ENCODE measurements at regions of chr1 and their contacts with region 1.

Region 1: GRCh38 chr1:91282695-91283420 is 121.8 kb downstream of the HFM1 start:
- DNase-seq: peak in 8 of 9 experiments; percentile 4 to 68 (median 32)
- ATAC-seq: no peak
- H3K4me3 ChIP-seq: no peak overlapping the region
- H3K4me3 Mint-ChIP-seq: no peak overlapping the region
- H3K27ac ChIP-seq: no peak overlapping the region
- H3K27ac Mint-ChIP-seq: no peak overlapping the region
- H3K4me1 ChIP-seq: no peaks in the 10 kb centered on the region
- H3K4me1 Mint-ChIP-seq: peaks cover 2% of the 10 kb centered on the region
- H3K27me3 ChIP-seq: no peaks in the 10 kb centered on the region
- H3K27me3 Mint-ChIP-seq: peaks cover 10% of the 10 kb centered on the region
- CTCF ChIP-seq: peak; percentile 73

Region 2: DNA sequence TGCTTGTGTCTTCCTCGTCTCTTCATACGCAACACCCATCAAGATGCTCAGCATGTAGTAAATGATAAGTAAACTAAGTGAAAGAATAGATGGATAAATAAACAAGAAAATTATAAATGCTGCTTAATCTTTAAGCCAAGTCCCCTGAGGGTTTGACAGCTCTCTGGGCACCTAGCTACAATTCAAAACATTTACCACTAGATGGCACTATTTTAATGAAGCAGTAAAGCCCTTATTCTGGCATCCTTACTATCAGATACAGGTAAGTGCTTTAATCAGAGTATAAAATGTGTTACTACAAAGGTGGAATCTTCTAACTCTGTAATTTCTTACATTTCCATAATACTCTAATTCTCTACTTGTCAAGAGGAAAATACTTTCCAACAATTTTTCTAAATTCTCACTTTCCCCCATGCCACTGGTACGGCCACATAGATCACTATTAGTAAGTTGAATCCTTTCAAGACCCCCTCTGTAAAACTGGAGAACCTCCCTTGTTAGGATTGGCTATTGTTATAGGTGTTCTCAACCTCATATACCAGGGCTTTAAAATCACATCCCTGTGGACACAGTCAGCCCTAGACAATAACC is 703.6 kb before region 1 on chr1:
- CTCF ChIA-PET with region 1: interaction called, 4 read pairs
- POLR2A ChIA-PET with region 1: no interaction called
- intact Hi-C with region 1: loop called (anchors 2 to 10 kb)
- DNase-seq: peak in 2 of 9 experiments; percentile 37 to 50
- ATAC-seq: no peak
- H3K4me3 ChIP-seq: no peak overlapping the region
- H3K4me3 Mint-ChIP-seq: no peak overlapping the region
- H3K27ac ChIP-seq: no peak overlapping the region
- H3K27ac Mint-ChIP-seq: no peak overlapping the region
- H3K4me1 ChIP-seq: no peaks in the 10 kb centered on the region
- H3K4me1 Mint-ChIP-seq: no peaks in the 10 kb centered on the region
- H3K27me3 ChIP-seq: peaks cover 2 to 3% of the 10 kb centered on the region in 2 experiments
- H3K27me3 Mint-ChIP-seq: no peaks in the 10 kb centered on the region
- CTCF ChIP-seq: peak; percentile 56

Region 3: DNA sequence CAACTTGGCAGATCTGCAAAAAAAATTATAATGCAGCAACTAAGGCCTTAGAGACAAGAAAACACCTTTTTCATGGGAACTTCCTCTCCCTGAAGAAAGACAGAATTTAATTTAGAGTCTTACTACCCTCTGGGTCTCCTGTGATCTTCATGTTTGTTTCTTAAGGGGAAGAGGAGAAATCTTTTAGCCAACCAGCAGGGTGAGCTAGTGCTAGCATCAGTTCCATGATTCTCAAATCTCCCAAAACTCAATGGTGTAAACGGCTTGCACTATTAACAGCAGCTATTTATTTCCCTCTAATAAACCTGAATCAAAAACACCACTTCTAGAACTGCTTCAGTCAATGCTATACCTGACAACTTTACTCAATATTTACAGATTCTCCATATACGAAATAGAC is 264.9 kb before region 1 on chr1:
- CTCF ChIA-PET with region 1: no interaction called
- POLR2A ChIA-PET with region 1: no interaction called
- intact Hi-C with region 1: no loop called
- DNase-seq: peak in 2 of 9 experiments; percentile 37 to 58
- ATAC-seq: no peak
- H3K4me3 ChIP-seq: no peak overlapping the region
- H3K4me3 Mint-ChIP-seq: peak overlapping the region; percentile 58
- H3K27ac ChIP-seq: no peak overlapping the region
- H3K27ac Mint-ChIP-seq: peak overlapping the region; percentile 14
- H3K4me1 ChIP-seq: peaks cover 66% of the 10 kb centered on the region
- H3K4me1 Mint-ChIP-seq: peaks cover 81% of the 10 kb centered on the region
- H3K27me3 ChIP-seq: no peaks in the 10 kb centered on the region
- H3K27me3 Mint-ChIP-seq: no peaks in the 10 kb centered on the region
- CTCF ChIP-seq: peak; percentile 22

Region 4: DNA sequence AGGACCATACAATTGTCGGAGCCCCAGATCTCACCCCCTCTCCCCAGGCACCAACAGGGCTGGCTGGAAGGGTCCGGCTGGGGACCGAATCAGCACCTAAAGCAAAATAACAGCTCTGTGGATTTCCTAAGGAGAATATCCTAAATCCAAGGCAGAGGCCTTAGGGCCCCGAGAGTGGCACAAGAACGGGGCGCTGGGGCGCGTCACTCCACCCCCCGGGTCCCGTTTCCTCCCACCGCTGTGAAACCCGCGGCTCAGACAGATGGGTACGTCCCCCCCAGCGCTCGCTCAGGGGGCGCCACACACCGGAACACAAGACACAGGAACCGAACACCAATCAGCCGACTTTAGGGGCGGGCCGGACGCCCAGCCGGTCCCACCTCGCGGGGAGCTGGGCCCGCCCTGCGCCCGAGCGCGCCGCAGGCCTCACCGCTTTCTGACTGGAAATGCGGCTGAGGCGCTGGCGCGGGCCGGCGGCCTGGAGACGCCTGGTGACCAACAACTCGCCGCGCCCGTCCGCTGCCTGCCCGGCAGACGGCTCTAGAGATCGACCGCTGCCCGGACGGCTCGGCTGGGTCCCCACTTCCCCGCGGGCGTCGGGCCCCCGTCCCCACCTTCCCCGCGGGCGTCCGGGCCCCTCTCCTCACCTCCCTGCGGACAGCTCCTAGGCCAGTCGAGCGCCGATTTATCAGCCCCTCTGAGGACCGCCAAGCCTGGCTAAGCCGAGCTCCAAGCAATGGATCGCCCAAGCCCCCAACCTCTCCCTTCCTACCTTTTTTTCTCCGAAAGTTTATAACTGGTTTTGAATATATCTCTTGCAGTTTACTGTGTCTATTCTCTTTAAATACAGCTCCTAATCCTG is 121.5 kb after region 1 on chr1 and contains the start of gene HFM1:
- CTCF ChIA-PET with region 1: no interaction called
- POLR2A ChIA-PET with region 1: no interaction called
- intact Hi-C with region 1: loop called (anchors 1 to 5 kb)
- DNase-seq: peak; percentile 21 to 83 (median 61)
- ATAC-seq: peak; percentile 99
- H3K4me3 ChIP-seq: peak within 1 kb of the TSS; percentile 41 to 54
- H3K4me3 Mint-ChIP-seq: peak within 1 kb of the TSS; percentile 80
- H3K27ac ChIP-seq: no peak within 1 kb of the TSS
- H3K27ac Mint-ChIP-seq: peak within 1 kb of the TSS; percentile 66
- H3K4me1 ChIP-seq: peaks cover 7% of the 10 kb centered on the region
- H3K4me1 Mint-ChIP-seq: peaks cover 11% of the 10 kb centered on the region
- H3K27me3 ChIP-seq: no peaks in the 10 kb centered on the region
- H3K27me3 Mint-ChIP-seq: peaks cover 34% of the 10 kb centered on the region
- CTCF ChIP-seq: no peak
- total RNA-seq, gene HFM1: not detected

Region 5: DNA sequence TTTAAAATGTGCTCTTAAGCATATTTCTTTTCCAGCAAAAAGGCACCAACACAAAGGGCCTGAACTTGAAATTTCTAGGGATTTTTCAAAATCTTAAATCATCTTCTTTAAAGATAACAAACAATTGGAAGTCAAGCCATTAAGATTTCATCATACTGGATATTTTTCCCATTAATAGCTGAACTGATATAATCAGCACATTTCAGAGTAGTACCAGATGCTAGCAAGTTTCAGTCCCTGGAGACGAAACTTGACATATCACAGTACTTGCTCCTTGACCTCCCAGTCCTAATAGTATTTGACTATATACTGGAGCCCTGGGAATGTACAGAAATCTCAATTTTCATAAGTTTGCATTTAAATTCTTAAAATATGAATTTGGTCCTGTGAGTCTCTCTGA is 207.6 kb after region 1 on chr1:
- CTCF ChIA-PET with region 1: no interaction called
- POLR2A ChIA-PET with region 1: no interaction called
- intact Hi-C with region 1: no loop called
- DNase-seq: no peak
- ATAC-seq: no peak
- H3K4me3 ChIP-seq: no peak overlapping the region
- H3K4me3 Mint-ChIP-seq: no peak overlapping the region
- H3K27ac ChIP-seq: no peak overlapping the region
- H3K27ac Mint-ChIP-seq: no peak overlapping the region
- H3K4me1 ChIP-seq: no peaks in the 10 kb centered on the region
- H3K4me1 Mint-ChIP-seq: peaks cover 6% of the 10 kb centered on the region
- H3K27me3 ChIP-seq: no peaks in the 10 kb centered on the region
- H3K27me3 Mint-ChIP-seq: peaks cover 3% of the 10 kb centered on the region
- CTCF ChIP-seq: no peak

Region 6: GRCh38 chr1:91500756-91501522 is 218.1 kb after region 1 on chr1 and contains the start of gene CDC7:
- CTCF ChIA-PET with region 1: no interaction called
- POLR2A ChIA-PET with region 1: no interaction called
- intact Hi-C with region 1: loop called in 1 of 2 experiments (anchors 1 kb)
- DNase-seq: peak; percentile 56 to 92 (median 85)
- ATAC-seq: peak; percentile 83
- H3K4me3 ChIP-seq: peak within 1 kb of the TSS; percentile 88 to 98
- H3K4me3 Mint-ChIP-seq: no peak within 1 kb of the TSS
- H3K27ac ChIP-seq: peak within 1 kb of the TSS; percentile 58 to 86
- H3K27ac Mint-ChIP-seq: no peak within 1 kb of the TSS
- H3K4me1 ChIP-seq: peaks cover 10% of the 10 kb centered on the region
- H3K4me1 Mint-ChIP-seq: peaks cover 21% of the 10 kb centered on the region
- H3K27me3 ChIP-seq: no peaks in the 10 kb centered on the region
- H3K27me3 Mint-ChIP-seq: no peaks in the 10 kb centered on the region
- CTCF ChIP-seq: no peak
- total RNA-seq, gene CDC7: 2.2 to 2.7 TPM

Region 7: DNA sequence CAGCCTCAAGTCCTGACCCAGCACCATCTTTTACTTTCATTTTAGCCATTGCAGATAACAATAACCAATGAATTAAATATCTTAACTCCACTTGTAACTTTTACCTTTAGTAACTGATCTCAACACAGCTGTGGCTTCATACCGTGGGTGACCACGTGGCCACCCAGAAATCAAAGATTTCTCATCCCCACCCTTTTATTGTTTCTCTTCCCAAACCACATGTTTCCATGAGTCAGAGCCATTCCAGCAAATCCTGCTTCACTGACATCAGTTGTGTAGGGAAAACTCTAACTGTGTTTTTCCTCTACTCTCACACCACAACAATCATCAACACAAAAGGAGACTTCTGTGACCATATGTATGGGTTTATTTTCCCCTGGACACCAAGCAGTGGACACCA is 641.3 kb after region 1 on chr1:
- CTCF ChIA-PET with region 1: interaction called, 10 read pairs
- POLR2A ChIA-PET with region 1: no interaction called
- intact Hi-C with region 1: loop called (anchors 1 kb)
- DNase-seq: no peak
- ATAC-seq: no peak
- H3K4me3 ChIP-seq: no peak overlapping the region
- H3K4me3 Mint-ChIP-seq: no peak overlapping the region
- H3K27ac ChIP-seq: no peak overlapping the region
- H3K27ac Mint-ChIP-seq: no peak overlapping the region
- H3K4me1 ChIP-seq: no peaks in the 10 kb centered on the region
- H3K4me1 Mint-ChIP-seq: no peaks in the 10 kb centered on the region
- H3K27me3 ChIP-seq: no peaks in the 10 kb centered on the region
- H3K27me3 Mint-ChIP-seq: no peaks in the 10 kb centered on the region
- CTCF ChIP-seq: no peak

Region 8: GRCh38 chr1:91929250-91929649 is 646.4 kb after region 1 on chr1:
- CTCF ChIA-PET with region 1: interaction called, 10 read pairs
- POLR2A ChIA-PET with region 1: no interaction called
- intact Hi-C with region 1: loop called (anchors 1 kb)
- DNase-seq: no peak
- ATAC-seq: no peak
- H3K4me3 ChIP-seq: no peak overlapping the region
- H3K4me3 Mint-ChIP-seq: no peak overlapping the region
- H3K27ac ChIP-seq: no peak overlapping the region
- H3K27ac Mint-ChIP-seq: no peak overlapping the region
- H3K4me1 ChIP-seq: no peaks in the 10 kb centered on the region
- H3K4me1 Mint-ChIP-seq: no peaks in the 10 kb centered on the region
- H3K27me3 ChIP-seq: no peaks in the 10 kb centered on the region
- H3K27me3 Mint-ChIP-seq: no peaks in the 10 kb centered on the region
- CTCF ChIP-seq: no peak

Region 9: DNA sequence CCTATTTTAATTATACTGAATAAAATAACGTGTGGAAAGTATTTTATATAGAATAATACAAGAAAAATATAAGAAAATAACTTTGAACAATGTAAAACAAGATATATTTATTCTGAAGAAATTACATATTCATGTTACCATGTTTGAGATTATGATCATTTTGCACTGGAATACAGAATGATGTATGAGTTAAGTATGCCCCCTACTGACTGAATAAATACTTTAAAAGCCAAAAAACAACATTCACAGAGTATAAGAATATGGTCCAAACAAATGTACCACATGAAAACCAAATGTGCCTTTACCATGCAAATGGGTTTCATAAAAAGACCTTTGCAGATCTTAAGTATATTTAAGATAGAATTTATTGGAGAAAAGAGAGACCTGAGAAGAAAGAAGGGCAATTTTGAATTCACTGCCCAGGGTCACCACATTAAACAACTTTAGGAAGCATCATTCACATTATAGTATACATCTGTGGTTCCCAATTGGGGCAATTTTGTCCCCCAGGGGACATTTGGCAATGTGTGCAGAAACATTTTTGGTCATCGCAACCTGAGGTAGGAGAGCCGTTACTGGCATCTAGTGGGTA is 1340.4 kb after region 1 on chr1:
- CTCF ChIA-PET with region 1: no interaction called
- POLR2A ChIA-PET with region 1: no interaction called
- intact Hi-C with region 1: loop called in 1 of 2 experiments (anchors 10 kb)
- DNase-seq: peak in 2 of 9 experiments; percentile 39 to 57
- ATAC-seq: no peak
- H3K4me3 ChIP-seq: no peak overlapping the region
- H3K4me3 Mint-ChIP-seq: no peak overlapping the region
- H3K27ac ChIP-seq: no peak overlapping the region
- H3K27ac Mint-ChIP-seq: no peak overlapping the region
- H3K4me1 ChIP-seq: no peaks in the 10 kb centered on the region
- H3K4me1 Mint-ChIP-seq: no peaks in the 10 kb centered on the region
- H3K27me3 ChIP-seq: no peaks in the 10 kb centered on the region
- H3K27me3 Mint-ChIP-seq: no peaks in the 10 kb centered on the region
- CTCF ChIP-seq: peak; percentile 81

Measured in CD8-positive, alpha-beta T cell (primary cell).